ENCODE measurements at regions of chr7 and their contacts with region 1.

Region 1: DNA sequence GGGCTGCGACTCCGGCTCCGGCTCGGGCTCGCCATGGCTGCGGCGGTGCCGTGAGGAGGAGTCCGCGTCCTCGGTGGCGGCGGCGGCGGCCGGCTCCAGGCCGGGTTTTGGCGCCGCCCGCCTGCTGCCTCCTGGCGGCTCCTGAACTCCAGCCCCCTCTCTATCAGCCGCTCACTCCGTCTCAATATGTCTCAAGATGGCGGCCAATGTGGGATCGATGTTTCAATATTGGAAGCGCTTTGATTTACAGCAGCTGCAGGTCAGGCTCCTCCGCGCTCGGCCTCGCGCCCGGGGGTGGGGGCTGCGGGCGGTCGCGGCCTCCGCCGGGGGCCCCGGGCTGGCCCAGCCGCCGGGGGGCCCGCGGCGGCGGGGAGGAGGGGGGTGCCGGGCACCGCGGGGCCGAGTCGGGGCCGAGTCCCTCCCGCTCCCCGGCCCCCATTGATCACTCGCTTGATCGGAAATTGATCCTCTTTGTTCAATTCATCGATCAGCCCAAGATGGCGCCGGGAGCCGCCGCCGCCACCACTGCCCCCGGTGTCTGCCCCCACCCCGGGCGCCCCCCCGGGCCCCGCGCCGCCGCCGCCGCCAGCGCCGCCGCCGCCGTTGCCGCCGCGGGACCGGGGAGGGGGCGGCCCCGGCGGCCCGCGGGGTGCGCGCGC is 1.5 kb upstream of the CUX1 start:
- DNase-seq: peak; percentile 85
- ATAC-seq: peak; percentile 78
- H3K4me3 Mint-ChIP-seq: peak overlapping the region; percentile 72
- H3K27ac Mint-ChIP-seq: peak overlapping the region; percentile 42
- H3K4me1 Mint-ChIP-seq: peaks cover 26% of the 10 kb centered on the region
- H3K27me3 Mint-ChIP-seq: peaks cover 2% of the 10 kb centered on the region

Region 2: GRCh38 chr7:101602484-101603241 is 213.3 kb before region 1 on chr7:
- CTCF ChIA-PET with region 1: no interaction called
- POLR2A ChIA-PET with region 1: no interaction called
- intact Hi-C with region 1: loop called in 1 of 2 experiments (anchors 2 kb)
- DNase-seq: peak; percentile 87
- ATAC-seq: peak; percentile 96
- H3K4me3 Mint-ChIP-seq: no peak overlapping the region
- H3K27ac Mint-ChIP-seq: no peak overlapping the region
- H3K4me1 Mint-ChIP-seq: no peaks in the 10 kb centered on the region
- H3K27me3 Mint-ChIP-seq: no peaks in the 10 kb centered on the region

Region 3: DNA sequence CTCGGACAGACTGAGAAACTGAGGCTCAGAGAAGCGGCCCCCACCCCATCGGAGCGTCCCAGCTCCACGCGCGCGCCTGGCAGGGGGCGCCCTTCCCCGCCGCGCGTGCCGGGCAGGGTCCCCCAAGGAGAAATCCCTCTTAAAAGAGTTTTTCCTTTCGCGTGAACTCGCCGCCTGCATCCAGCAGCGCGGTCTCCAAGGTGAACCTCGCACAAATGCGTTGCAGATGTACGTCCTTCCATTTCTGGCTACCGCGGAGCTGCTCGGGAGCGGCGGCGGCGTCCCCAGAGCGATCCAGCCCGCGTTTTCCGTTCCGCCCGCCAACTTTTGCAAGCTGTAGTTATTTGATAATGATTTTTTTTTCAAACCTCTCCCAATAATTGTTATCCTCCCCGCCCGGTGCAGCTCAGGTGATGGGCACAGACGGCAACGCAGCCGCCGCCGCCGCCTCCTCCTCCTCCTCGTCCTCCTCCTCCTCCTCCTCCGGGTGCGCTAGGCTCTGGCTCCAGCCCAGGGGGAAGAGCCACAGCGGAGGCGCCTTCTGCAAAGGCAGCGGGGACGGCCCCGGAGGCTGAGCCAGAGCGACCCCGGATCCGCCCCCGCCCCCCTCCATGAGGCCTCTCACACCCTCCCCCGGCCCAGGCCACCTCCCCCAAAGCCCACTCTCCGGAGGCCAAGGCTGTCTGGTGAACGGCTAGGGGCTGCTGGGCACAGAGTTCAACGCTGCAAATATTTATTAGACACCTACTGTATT is 72.5 kb before region 1 on chr7:
- CTCF ChIA-PET with region 1: interaction called, 9 read pairs
- POLR2A ChIA-PET with region 1: no interaction called
- intact Hi-C with region 1: loop called (anchors 1 kb)
- DNase-seq: peak; percentile 77
- ATAC-seq: peak; percentile 71
- H3K4me3 Mint-ChIP-seq: peak overlapping the region; percentile 67
- H3K27ac Mint-ChIP-seq: no peak overlapping the region
- H3K4me1 Mint-ChIP-seq: peaks cover 10% of the 10 kb centered on the region
- H3K27me3 Mint-ChIP-seq: peaks cover 3% of the 10 kb centered on the region

Region 4: DNA sequence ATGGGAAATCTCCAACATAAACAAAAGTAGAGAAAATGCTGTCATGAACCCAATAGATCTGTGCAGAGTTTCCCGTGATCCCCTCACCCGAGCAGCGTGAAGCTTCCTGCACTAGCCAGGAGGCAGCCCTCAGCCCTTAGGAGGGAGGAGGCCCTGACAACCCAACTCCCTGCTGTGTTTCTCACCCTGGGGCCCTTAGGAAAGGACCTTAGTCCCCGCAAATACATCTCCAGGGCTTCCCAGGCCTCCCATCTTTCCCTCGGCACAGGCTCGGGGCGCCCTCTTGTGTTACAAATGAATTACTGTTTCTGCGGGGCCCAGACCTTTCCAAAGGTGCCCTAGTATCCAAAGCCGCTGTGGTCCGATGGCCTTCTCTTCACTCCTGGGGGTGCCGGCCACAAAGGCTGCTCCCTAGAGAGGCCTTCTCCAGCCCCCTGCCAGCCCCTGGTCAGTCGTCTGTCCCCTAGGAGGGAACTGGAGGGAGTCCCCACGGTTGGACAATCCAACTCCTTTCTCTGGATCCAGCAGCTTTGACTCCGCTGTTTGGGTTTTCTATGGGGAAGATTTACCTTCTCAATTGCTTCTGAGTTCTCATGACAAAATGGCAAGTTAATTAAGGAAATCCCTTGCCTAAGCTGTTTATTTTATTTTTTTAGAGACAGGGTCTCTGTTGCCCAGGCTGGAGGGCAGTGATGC is 420.8 kb after region 1 on chr7:
- CTCF ChIA-PET with region 1: no interaction called
- POLR2A ChIA-PET with region 1: no interaction called
- intact Hi-C with region 1: loop called in 1 of 2 experiments (anchors 2 kb)
- DNase-seq: peak; percentile 73
- ATAC-seq: peak; percentile 77
- H3K4me3 Mint-ChIP-seq: no peak overlapping the region
- H3K27ac Mint-ChIP-seq: no peak overlapping the region
- H3K4me1 Mint-ChIP-seq: no peaks in the 10 kb centered on the region
- H3K27me3 Mint-ChIP-seq: no peaks in the 10 kb centered on the region

Measured in activated CD4-positive, alpha-beta T cell treated with anti-CD3 and anti-CD28 coated beads for 36 hours (primary cell).